Posterior vena cava (tissue), 2 donors: ENCODE measurements at regions of chr14 and their contacts with region 1.

Region 1: DNA sequence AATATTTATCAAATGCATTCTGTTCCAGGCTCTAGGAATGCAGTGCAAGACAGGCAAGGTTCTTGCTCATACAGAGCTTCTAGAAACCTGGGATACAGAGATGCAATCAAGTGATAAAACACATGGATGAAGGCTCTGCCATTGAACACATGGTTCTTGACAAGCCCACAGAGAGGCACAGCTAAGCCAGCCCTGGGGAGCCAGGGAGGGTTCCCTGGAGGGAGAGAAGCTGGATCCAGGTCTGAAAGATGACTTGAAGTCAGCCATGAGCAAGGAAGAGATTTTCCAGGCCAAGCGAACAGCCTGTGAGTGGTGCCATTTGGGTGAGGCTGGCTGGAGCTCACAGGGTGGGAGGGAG is 66.2 kb downstream of the IRF2BPL start:
- DNase-seq: no peak

Region 2: DNA sequence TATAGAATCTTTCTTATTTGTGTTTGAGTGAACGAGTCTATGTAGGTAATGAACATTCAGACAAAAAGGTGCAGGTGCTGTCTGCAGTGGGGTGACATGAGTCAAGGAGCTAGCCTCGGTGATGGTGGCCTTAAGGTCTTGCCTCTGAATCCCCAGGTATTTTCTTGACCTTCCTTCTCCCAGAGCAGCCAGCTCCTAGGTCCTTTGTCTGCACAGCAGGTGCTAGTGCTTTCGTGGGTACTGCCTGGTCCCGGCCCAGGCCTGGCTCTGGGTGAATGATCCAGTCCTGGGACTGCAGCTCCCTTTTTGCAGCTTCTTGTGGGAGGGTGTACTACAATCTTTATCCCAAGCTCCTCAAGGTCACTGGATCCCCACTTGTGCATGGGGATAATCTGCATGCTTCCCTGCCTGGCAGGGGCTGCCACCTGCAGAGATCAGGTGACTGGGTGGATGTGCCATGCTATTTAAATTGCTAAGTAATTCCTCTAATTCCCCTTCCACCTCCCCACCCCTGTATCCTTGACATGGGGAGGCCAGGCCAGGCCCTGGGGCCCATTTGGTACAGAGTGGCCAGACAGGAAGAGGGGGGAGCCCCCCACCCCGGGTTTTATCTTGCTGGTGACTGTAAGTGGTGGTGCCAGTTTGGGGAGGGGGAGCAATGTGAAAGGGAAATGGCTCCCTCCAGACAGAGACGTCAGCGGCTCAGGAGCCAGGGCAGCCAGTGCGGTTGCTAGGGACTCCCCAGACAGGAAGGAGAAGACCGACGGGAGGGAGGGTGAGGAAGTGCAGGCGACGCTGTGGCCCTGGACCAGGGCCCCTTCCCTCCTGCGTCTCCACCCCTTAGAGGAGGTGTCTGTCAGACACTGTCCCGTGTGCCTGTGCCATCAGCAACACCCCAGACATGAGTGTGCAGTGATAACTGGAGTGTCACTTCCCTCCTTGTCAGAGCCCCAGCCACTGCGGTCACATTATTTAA is 194.3 kb before region 1 on chr14:
- intact Hi-C with region 1: no loop called
- DNase-seq: peak; percentile 88

Region 3: GRCh38 chr14:77000340-77001270 is 38.3 kb after region 1 on chr14:
- intact Hi-C with region 1: loop called in 1 of 2 experiments (anchors 5 kb)
- DNase-seq: no peak